Right lobe of liver (tissue), 6 donors: ENCODE measurements at regions of chr14 and their contacts with region 1.

Region 1: DNA sequence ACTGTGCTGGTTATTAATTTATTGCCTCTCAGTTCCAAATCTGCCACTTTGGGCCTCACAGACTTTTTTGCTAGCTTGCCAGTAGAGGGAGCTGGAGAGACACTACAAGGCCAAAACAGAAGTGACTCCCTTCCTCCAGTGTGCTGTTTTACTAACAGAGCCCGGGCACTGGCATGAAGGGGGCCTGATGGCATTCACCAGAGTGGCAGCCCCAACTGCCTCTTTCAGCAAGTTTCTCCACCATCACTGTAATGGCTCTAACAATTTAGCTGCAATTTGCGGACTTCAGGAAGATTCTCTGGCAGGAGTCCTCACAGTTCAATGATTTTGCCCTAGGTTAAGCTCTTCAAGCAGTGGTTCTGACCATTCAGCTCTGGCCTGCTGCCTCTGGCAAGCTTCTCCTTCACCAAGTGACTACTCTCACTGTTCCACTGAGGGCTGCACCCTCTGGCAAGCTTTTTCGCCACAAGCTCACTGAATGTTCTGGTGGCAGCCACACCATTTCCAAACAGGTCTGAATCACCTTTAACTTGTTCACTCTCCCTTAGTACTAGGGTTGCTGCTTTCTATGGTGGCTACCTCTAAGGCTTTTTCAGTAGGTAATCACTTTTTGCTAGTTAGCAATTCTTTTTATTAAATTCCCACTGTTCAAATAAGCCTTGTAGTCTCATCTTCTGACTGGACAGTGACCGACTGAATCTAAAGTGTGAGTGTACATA is 104.9 kb downstream of the ZC3H14 start:
- DNase-seq: peak in 2 of 3 donors; percentile 25 to 73
- ATAC-seq: peak; percentile 98 to 99 (median 98)
- H3K4me3 ChIP-seq: no peak overlapping the region
- H3K27ac ChIP-seq: no peak overlapping the region
- H3K4me1 ChIP-seq: peaks cover 0 to 7% (median 3%) of the 10 kb centered on the region in 4 donors
- H3K27me3 ChIP-seq: no peaks in the 10 kb centered on the region
- CTCF ChIP-seq: peak; percentile 70 to 89 (median 82)
- POLR2A ChIP-seq: no peak

Region 2: GRCh38 chr14:88749139-88749538 is 81.4 kb after region 1 on chr14:
- intact Hi-C with region 1: no loop called
- DNase-seq: no peak
- ATAC-seq: no peak
- H3K4me3 ChIP-seq: no peak overlapping the region
- H3K27ac ChIP-seq: no peak overlapping the region
- H3K4me1 ChIP-seq: peaks cover 0 to 3% (median 0%) of the 10 kb centered on the region in 4 donors
- H3K27me3 ChIP-seq: no peaks in the 10 kb centered on the region
- CTCF ChIP-seq: no peak
- POLR2A ChIP-seq: no peak

Region 3: GRCh38 chr14:88852632-88853031 is 184.9 kb after region 1 on chr14:
- intact Hi-C with region 1: no loop called
- DNase-seq: no peak
- ATAC-seq: no peak
- H3K4me3 ChIP-seq: no peak overlapping the region
- H3K27ac ChIP-seq: no peak overlapping the region
- H3K4me1 ChIP-seq: no peaks in the 10 kb centered on the region
- H3K27me3 ChIP-seq: no peaks in the 10 kb centered on the region
- CTCF ChIP-seq: no peak
- POLR2A ChIP-seq: no peak

Region 4: DNA sequence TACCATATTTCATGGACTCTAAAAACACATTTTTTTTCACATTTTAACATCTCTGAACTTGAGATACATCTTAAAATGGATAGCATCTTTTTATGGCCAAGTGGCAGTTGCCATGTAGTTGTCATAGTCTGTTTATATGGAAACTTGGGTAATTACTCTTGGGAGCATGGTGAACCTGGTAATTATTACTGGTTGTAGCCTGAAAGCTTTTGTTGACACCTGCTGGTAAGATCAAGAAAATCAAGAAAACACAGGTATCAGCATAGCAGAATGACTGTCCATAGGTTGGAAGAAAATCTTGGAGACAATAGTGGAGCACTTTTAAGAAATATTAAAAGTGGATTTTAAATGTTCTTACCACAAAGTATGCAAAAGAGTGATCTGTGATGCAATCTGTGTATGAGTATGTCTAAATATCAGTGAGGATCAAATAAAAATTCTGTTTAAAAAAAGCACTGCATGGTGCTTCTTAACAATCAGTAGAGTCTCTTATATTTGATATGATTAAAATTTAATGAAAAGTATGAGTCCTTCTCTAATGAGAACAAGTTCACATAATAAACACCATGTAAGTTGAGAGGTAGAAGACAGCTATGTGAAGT is 200.9 kb after region 1 on chr14:
- intact Hi-C with region 1: loop called in 1 of 2 experiments (anchors 10 kb)
- DNase-seq: no peak
- ATAC-seq: peak; percentile 80 to 91 (median 85)
- H3K4me3 ChIP-seq: no peak overlapping the region
- H3K27ac ChIP-seq: no peak overlapping the region
- H3K4me1 ChIP-seq: no peaks in the 10 kb centered on the region
- H3K27me3 ChIP-seq: no peaks in the 10 kb centered on the region
- CTCF ChIP-seq: peak; percentile 37 to 55 (median 51)
- POLR2A ChIP-seq: no peak